ENCODE measurements at regions of chr4 and their contacts with region 1.

Region 1: DNA sequence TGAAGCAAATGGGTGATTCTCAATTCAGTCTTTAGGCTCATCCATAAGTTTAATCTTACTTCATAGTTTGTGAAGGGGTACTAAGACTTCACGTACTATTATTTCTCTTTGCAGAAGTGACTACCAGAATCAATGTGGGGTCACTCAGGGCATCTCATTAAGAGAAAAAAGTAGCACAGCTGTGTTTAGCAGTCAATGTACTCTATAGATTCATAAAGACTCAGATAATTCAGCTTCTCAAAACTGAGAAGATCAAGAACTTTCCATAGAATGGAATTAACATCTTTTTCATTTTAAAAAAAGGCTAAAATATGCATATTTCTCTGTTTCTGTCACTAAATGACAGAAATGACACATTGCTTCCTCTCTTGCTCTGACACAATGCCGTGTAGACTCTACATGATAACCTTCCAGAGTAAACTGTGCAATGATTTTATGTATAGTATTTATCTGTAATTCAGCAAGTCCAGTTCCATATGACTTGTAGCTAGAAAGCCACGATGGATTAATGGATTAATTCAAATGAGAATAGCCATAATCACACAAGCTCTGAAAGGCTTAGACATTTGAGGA is 20.3 kb upstream of the LSM6 start:
- DNase-seq: no peak
- ATAC-seq: no peak
- H3K4me3 ChIP-seq: no peak overlapping the region
- H3K4me3 Mint-ChIP-seq: no peak overlapping the region
- H3K27ac ChIP-seq: no peak overlapping the region
- H3K27ac Mint-ChIP-seq: no peak overlapping the region
- H3K4me1 ChIP-seq: no peaks in the 10 kb centered on the region
- H3K4me1 Mint-ChIP-seq: peaks cover 0 to 6% (median 6%) of the 10 kb centered on the region in 3 donors
- H3K27me3 ChIP-seq: no peaks in the 10 kb centered on the region
- H3K27me3 Mint-ChIP-seq: peaks cover 16 to 22% of the 10 kb centered on the region in 2 donors

Region 2: DNA sequence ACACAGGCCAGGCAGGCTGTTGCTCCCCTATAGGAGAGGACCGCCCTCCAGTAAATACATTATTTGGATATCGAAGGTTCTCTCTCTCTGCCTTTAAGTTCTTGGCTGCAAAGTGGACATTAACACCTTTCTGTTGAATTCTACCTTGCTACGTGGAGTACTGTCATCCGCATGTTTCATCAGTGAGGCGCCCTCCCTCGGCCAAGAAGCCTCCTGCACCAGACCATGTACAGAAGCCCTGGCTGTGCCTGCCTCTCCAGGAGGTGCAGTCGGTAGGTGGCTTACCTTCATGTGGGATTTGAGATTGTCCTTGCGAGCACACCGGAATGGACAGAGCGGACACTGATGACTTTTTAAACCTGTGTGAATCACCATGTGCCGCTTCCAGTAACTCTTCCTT is 263.3 kb before region 1 on chr4:
- CTCF ChIA-PET with region 1: no interaction called
- POLR2A ChIA-PET with region 1: interaction called in 1 of 2 experiments, 13 read pairs
- DNase-seq: no peak
- ATAC-seq: no peak
- H3K4me3 ChIP-seq: no peak overlapping the region
- H3K4me3 Mint-ChIP-seq: no peak overlapping the region
- H3K27ac ChIP-seq: no peak overlapping the region
- H3K27ac Mint-ChIP-seq: no peak overlapping the region
- H3K4me1 ChIP-seq: peaks cover 0 to 18% of the 10 kb centered on the region in 2 experiments
- H3K4me1 Mint-ChIP-seq: peaks cover 32% of the 10 kb centered on the region in 3 donors
- H3K27me3 ChIP-seq: no peaks in the 10 kb centered on the region
- H3K27me3 Mint-ChIP-seq: no peaks in the 10 kb centered on the region

Region 3: GRCh38 chr4:147220833-147221232 is 1065.6 kb after region 1 on chr4:
- CTCF ChIA-PET with region 1: no interaction called
- POLR2A ChIA-PET with region 1: no interaction called
- DNase-seq: no peak
- ATAC-seq: no peak
- H3K4me3 ChIP-seq: no peak overlapping the region
- H3K4me3 Mint-ChIP-seq: no peak overlapping the region
- H3K27ac ChIP-seq: no peak overlapping the region
- H3K27ac Mint-ChIP-seq: no peak overlapping the region
- H3K4me1 ChIP-seq: no peaks in the 10 kb centered on the region
- H3K4me1 Mint-ChIP-seq: no peaks in the 10 kb centered on the region
- H3K27me3 ChIP-seq: no peaks in the 10 kb centered on the region
- H3K27me3 Mint-ChIP-seq: no peaks in the 10 kb centered on the region

Measured in T-cell (primary cell).